AG04449 (cell line): ENCODE measurements at regions of chr14 and their contacts with region 1.

Region 1: DNA sequence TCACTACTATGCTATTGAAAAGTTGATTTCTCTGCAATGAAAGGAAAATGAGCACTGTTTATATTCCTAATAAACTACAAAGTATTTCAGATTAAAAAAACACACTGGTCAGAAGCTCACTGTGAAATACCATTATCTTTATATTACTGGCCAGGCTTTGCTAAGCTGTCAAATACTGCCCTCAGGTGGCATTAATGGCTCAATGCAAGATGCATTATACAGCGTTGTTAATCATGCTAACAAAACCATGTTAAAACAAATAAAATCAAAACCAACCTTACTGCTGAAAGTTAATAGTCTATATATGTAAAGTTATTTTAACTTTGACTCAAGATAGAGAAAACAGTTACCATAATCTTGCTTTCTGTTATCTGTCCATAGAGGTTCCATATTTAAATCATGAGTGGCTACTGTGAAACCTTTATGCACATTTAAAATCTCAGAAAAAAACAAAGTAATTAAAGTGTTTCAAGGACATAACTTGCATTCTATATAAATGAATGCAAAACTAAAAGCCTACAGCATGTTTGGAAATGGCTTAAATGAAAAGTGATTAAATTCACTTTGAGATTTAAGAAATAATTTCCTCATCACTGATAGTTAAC is 121.7 kb downstream of the RALGAPA1 start:
- DNase-seq: no peak
- H3K4me3 ChIP-seq: no peak overlapping the region
- CTCF ChIP-seq: peak; percentile 66

Region 2: DNA sequence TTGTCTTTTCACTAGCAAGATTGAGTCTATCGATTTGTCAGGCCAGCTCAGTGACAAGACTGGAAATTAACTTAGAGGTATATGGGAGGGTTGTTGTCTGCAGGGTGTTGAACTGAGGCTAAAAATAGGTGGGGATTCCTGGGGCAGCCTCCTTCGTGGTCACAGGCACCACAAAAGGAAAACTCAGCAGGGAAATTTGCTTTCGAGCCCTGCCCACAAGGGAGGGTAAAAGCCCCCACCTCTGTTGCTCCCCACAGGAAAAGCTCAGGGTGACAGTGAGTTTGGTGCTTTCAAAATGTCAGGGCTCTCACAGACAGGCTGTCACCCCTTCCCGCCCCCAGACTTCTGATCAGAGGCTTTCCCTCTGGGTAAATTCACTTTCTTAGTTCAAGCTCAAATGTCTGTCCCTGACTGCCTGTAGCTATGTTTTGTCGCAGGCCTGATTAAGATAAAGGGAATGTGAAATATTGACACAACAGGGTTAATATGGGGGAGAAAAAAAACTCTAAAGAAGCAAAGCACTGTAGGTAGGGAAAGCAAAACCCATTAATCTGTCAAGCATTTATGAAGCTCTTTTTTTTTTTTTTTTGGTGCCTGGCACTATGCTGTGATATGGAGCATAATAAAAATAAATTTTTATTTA is 271.2 kb before region 1 on chr14:
- CTCF ChIA-PET with region 1: interaction called, 37 read pairs
- POLR2A ChIA-PET with region 1: no interaction called
- DNase-seq: no peak
- H3K4me3 ChIP-seq: no peak overlapping the region
- CTCF ChIP-seq: no peak

Region 3: DNA sequence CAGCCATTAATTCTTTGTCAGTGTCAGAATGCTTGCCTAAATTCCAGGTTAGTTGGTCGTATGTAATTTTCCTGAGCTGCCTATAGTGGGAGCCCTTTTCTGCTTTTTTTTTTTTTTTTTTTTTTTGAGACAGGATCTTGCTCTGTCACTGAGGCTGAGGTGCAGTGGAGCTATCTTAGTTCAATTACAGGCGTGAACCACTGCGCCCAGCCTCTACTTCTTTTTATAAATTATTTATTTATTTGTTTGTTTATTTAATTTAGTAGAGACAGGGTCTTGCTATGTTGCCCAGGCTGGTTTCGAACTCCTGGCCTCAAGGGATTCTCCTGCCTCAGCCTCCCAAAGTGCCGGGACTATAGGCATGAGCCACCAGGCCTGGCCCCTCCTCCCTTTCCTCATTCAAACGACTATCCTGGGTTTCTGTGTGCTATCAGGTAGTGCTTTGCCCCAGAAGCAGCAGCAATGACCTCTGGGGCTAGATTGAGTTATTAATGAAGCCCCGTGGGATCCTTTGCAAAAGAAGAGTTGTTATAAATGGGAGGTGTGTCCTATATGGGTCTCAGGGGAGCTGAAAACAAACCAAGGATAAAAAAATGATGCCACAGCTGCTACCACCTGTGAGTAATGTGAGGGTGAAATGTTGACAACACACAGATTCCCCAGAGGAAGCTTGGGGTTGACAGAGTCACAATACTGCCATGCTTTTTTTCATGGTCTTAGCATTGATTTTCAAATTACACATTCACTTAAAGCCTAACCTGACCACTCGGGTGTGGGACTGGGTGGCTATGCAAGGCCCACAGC is 248.3 kb before region 1 on chr14:
- CTCF ChIA-PET with region 1: interaction called, 17 read pairs
- POLR2A ChIA-PET with region 1: no interaction called
- DNase-seq: no peak
- H3K4me3 ChIP-seq: no peak overlapping the region
- CTCF ChIP-seq: peak; percentile 24

Region 4: GRCh38 chr14:35539969-35540368 is 147.5 kb before region 1 on chr14:
- CTCF ChIA-PET with region 1: no interaction called
- POLR2A ChIA-PET with region 1: no interaction called
- DNase-seq: no peak
- H3K4me3 ChIP-seq: no peak overlapping the region
- CTCF ChIP-seq: no peak

Region 5: DNA sequence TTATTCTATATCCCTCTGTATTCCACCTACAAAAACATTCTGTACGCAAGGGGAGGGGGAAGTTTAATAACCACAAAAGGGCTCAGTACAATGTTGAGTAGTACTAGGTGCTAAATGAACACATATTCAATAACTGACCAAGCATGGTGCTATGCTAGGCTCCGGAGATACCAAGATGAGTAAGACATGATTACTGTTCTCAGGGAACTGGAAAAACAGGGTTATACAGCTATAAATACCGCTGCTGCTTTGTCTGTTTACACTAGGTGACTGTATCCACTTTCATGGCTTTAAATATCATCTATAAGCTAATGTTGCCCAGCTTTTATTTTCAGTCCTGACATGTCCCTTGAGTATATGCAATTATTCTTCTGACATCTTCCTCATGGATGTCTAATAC is 17.6 kb before region 1 on chr14:
- CTCF ChIA-PET with region 1: interaction called, 20 read pairs
- POLR2A ChIA-PET with region 1: no interaction called
- DNase-seq: peak; percentile 31
- H3K4me3 ChIP-seq: no peak overlapping the region
- CTCF ChIP-seq: no peak

Region 6: DNA sequence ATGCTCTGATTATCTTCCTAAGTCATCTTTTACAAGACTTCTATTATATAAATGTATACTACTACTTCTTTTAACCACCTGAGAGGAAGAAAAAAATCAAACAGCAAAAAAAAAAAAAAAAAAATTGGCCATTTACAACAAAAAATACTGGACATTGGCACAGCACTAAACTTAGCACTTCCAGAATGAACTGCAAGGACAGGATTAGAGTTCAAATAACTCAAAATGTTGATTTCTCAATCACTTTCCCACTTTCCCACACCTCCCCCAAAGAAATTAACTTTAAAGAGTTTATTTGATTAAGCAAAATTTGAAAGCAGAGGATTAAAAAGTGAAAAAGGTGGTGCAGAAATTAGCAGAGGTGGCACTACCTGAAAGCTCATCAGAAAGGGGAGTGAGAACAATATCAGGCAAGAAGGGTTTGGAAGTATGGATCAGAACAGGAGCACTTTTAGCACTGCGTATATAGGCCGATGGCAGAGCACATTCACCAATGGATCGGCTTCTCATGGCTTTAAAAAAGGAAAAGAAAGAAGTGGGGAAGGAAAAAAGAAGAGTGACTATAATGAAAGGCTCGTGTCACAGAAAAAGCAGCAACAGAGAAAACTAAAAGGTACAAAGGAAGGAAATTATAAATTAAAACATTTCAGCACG is 12.5 kb after region 1 on chr14:
- CTCF ChIA-PET with region 1: interaction called, 13 read pairs
- POLR2A ChIA-PET with region 1: no interaction called
- DNase-seq: no peak
- H3K4me3 ChIP-seq: no peak overlapping the region
- CTCF ChIP-seq: no peak